ENCODE measurements at regions of chr10 and their contacts with region 1.

Region 1: GRCh38 chr10:102503281-102504220 is at the start of gene SUFU:
- DNase-seq: peak; percentile 98 to 99
- H3K4me3 ChIP-seq: peak within 1 kb of the TSS; percentile 85
- H3K4me3 Mint-ChIP-seq: no peak within 1 kb of the TSS
- H3K27ac Mint-ChIP-seq: no peak within 1 kb of the TSS
- H3K4me1 ChIP-seq: no peaks in the 10 kb centered on the region
- H3K4me1 Mint-ChIP-seq: no peaks in the 10 kb centered on the region
- H3K27me3 ChIP-seq: no peaks in the 10 kb centered on the region
- H3K27me3 Mint-ChIP-seq: no peaks in the 10 kb centered on the region
- CTCF ChIP-seq: peak; percentile 76 to 96
- total RNA-seq, gene SUFU: 10.6 and 11.4 TPM in 2 replicates

Region 2: DNA sequence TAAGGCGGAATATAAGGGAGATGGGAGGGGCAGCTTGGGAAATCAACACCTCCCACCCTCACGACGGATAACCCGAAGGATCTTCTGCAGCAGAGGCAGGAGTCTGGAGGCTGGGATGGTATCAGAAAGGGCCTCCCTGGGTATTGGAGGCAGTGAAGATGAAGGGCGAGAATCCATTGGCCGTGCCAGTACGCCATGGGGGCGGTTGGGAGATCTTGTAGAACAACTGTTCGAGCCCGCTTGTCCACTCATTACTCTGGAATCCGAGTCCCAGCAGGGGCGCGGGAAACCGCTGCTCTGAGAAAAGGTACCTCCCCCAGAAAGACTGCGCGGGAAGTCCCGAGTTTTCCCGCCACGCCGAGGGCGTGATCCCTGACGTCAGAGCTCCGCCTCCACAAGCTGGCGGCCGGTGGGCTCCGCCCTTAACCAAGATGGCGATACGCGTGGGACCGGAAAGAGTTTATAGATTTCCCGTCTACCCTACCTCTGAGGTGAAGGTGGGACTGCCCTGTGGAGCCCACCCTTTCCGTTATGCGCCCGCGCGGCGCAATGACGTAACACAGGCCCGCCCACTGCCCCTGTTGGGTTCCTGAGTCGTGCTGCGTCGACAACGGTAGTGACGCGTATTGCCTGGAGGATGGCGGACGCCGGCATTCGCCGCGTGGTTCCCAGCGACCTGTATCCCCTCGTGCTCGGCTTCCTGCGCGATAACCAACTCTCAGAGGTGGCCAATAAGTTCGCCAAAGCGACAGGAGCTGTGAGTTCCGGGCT is 351.6 kb before region 1 on chr10 and contains the start of gene NOLC1:
- CTCF ChIA-PET with region 1: interaction called, 3 read pairs
- POLR2A ChIA-PET with region 1: no interaction called
- intact Hi-C with region 1: loop called (anchors 1 kb)
- DNase-seq: peak; percentile 99
- H3K4me3 ChIP-seq: peak within 1 kb of the TSS; percentile 87
- H3K4me3 Mint-ChIP-seq: peak within 1 kb of the TSS; percentile 91
- H3K27ac Mint-ChIP-seq: peak within 1 kb of the TSS; percentile 99
- H3K4me1 ChIP-seq: peaks cover 26% of the 10 kb centered on the region
- H3K4me1 Mint-ChIP-seq: peaks cover 30% of the 10 kb centered on the region
- H3K27me3 ChIP-seq: no peaks in the 10 kb centered on the region
- H3K27me3 Mint-ChIP-seq: no peaks in the 10 kb centered on the region
- CTCF ChIP-seq: no peak
- total RNA-seq, gene NOLC1: 137 and 147 TPM in 2 replicates

Region 3: GRCh38 chr10:102432162-102432950 is 71.2 kb before region 1 on chr10 and contains the start of gene CUEDC2:
- CTCF ChIA-PET with region 1: interaction called, 8 read pairs
- POLR2A ChIA-PET with region 1: interaction called, 4 read pairs
- intact Hi-C with region 1: loop called (anchors 2 kb)
- DNase-seq: peak; percentile 97 to 98
- H3K4me3 ChIP-seq: peak within 1 kb of the TSS; percentile 77
- H3K4me3 Mint-ChIP-seq: peak within 1 kb of the TSS; percentile 73
- H3K27ac Mint-ChIP-seq: peak within 1 kb of the TSS; percentile 65
- H3K4me1 ChIP-seq: peaks cover 11% of the 10 kb centered on the region
- H3K4me1 Mint-ChIP-seq: peaks cover 32% of the 10 kb centered on the region
- H3K27me3 ChIP-seq: no peaks in the 10 kb centered on the region
- H3K27me3 Mint-ChIP-seq: no peaks in the 10 kb centered on the region
- CTCF ChIP-seq: no peak
- total RNA-seq, gene CUEDC2: 32.1 and 32.6 TPM in 2 replicates

Region 4: GRCh38 chr10:102461187-102462054 is 42.1 kb before region 1 on chr10:
- CTCF ChIA-PET with region 1: interaction called, 3 read pairs
- POLR2A ChIA-PET with region 1: interaction called, 3 read pairs
- intact Hi-C with region 1: loop called (anchors 1 kb)
- DNase-seq: peak; percentile 94 to 98
- H3K4me3 ChIP-seq: peak overlapping the region; percentile 54
- H3K4me3 Mint-ChIP-seq: peak overlapping the region; percentile 96
- H3K27ac Mint-ChIP-seq: peak overlapping the region; percentile 78
- H3K4me1 ChIP-seq: peaks cover 32% of the 10 kb centered on the region
- H3K4me1 Mint-ChIP-seq: peaks cover 24% of the 10 kb centered on the region
- H3K27me3 ChIP-seq: no peaks in the 10 kb centered on the region
- H3K27me3 Mint-ChIP-seq: no peaks in the 10 kb centered on the region
- CTCF ChIP-seq: no peak

Region 5: GRCh38 chr10:102583435-102584417 is 80.2 kb after region 1 on chr10:
- CTCF ChIA-PET with region 1: interaction called, 122 read pairs
- POLR2A ChIA-PET with region 1: interaction called, 5 read pairs
- intact Hi-C with region 1: loop called (anchors 1 kb)
- DNase-seq: peak; percentile 83 to 86
- H3K4me3 ChIP-seq: no peak overlapping the region
- H3K4me3 Mint-ChIP-seq: no peak overlapping the region
- H3K27ac Mint-ChIP-seq: no peak overlapping the region
- H3K4me1 ChIP-seq: no peaks in the 10 kb centered on the region
- H3K4me1 Mint-ChIP-seq: no peaks in the 10 kb centered on the region
- H3K27me3 ChIP-seq: no peaks in the 10 kb centered on the region
- H3K27me3 Mint-ChIP-seq: no peaks in the 10 kb centered on the region
- CTCF ChIP-seq: peak; percentile 78 to 93

Region 6: GRCh38 chr10:102641880-102642735 is 138.6 kb after region 1 on chr10:
- CTCF ChIA-PET with region 1: interaction called, 9 read pairs
- POLR2A ChIA-PET with region 1: no interaction called
- intact Hi-C with region 1: loop called (anchors 1 kb)
- DNase-seq: peak; percentile 97 to 98
- H3K4me3 ChIP-seq: peak overlapping the region; percentile 74
- H3K4me3 Mint-ChIP-seq: peak overlapping the region; percentile 92
- H3K27ac Mint-ChIP-seq: peak overlapping the region; percentile 78
- H3K4me1 ChIP-seq: peaks cover 11% of the 10 kb centered on the region
- H3K4me1 Mint-ChIP-seq: peaks cover 18% of the 10 kb centered on the region
- H3K27me3 ChIP-seq: no peaks in the 10 kb centered on the region
- H3K27me3 Mint-ChIP-seq: no peaks in the 10 kb centered on the region
- CTCF ChIP-seq: no peak